ENCODE measurements at regions of chr3 and their contacts with region 1.

Region 1: GRCh38 chr3:190617185-190617584 is 103.3 kb downstream of the IL1RAP start:
- DNase-seq: peak; percentile 62
- H3K4me3 Mint-ChIP-seq: no peak overlapping the region
- H3K27ac Mint-ChIP-seq: peak overlapping the region; percentile 95
- H3K4me1 Mint-ChIP-seq: peaks cover 48% of the 10 kb centered on the region
- H3K27me3 Mint-ChIP-seq: no peaks in the 10 kb centered on the region

Region 2: GRCh38 chr3:190306513-190307165 is 310.5 kb before region 1 on chr3:
- CTCF ChIA-PET with region 1: no interaction called
- intact Hi-C with region 1: loop called (anchors 1 kb)
- DNase-seq: peak; percentile 49
- H3K4me3 Mint-ChIP-seq: no peak overlapping the region
- H3K27ac Mint-ChIP-seq: peak overlapping the region; percentile 33
- H3K4me1 Mint-ChIP-seq: peaks cover 25% of the 10 kb centered on the region
- H3K27me3 Mint-ChIP-seq: no peaks in the 10 kb centered on the region

Region 3: GRCh38 chr3:190384241-190384863 is 232.8 kb before region 1 on chr3:
- CTCF ChIA-PET with region 1: no interaction called
- intact Hi-C with region 1: loop called (anchors 5 kb)
- DNase-seq: peak; percentile 48
- H3K4me3 Mint-ChIP-seq: no peak overlapping the region
- H3K27ac Mint-ChIP-seq: no peak overlapping the region
- H3K4me1 Mint-ChIP-seq: peaks cover 8% of the 10 kb centered on the region
- H3K27me3 Mint-ChIP-seq: peaks cover 5% of the 10 kb centered on the region

Region 4: GRCh38 chr3:190491533-190492054 is 125.6 kb before region 1 on chr3:
- CTCF ChIA-PET with region 1: no interaction called
- intact Hi-C with region 1: loop called (anchors 1 kb)
- DNase-seq: peak; percentile 30
- H3K4me3 Mint-ChIP-seq: no peak overlapping the region
- H3K27ac Mint-ChIP-seq: no peak overlapping the region
- H3K4me1 Mint-ChIP-seq: peaks cover 24% of the 10 kb centered on the region
- H3K27me3 Mint-ChIP-seq: peaks cover 46% of the 10 kb centered on the region

Region 5: DNA sequence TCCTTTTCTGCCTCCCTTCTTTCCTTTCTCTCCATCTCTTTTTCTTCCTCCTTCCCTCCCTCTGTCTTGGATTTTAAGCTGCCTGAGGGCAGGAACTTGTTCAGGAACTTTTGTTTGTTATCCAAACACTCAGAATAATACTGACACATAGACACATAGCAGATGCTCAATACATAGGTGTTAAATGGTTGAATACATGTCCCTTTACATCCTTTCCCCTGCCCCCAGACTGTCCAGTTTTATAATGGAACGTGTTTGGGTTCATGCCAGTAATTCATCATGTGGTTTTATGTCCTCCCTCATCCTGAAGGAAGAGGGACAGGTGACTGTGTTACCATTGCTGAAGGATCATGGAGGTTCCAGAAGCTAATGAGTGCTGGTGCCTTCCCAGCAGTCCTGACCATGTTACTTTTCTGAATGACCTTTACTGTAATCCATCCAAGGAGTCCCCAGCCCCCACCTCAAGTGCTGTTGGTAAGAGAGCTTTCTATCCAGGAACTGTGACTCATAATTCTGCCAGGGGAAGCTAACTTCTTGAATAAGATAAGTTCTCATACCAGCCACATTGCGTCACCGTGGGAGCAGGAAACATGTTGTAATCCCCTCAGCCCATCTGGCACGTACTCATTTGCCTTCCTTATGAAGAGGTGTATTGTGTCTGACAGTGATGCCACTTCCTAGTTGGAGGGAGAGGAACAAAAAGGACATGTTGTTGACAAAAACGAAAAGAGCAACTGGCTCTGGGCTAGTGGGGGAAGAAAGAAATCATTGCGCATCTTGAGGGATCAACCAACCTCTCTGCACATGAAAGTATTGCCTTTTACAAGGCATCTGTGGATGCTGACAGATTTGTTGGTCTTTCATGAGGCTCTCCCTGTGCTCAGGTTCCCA is 50.9 kb before region 1 on chr3:
- CTCF ChIA-PET with region 1: interaction called, 6 read pairs
- intact Hi-C with region 1: loop called (anchors 1 kb)
- DNase-seq: peak; percentile 94
- H3K4me3 Mint-ChIP-seq: no peak overlapping the region
- H3K27ac Mint-ChIP-seq: peak overlapping the region; percentile 93
- H3K4me1 Mint-ChIP-seq: peaks cover 38% of the 10 kb centered on the region
- H3K27me3 Mint-ChIP-seq: no peaks in the 10 kb centered on the region

Region 6: DNA sequence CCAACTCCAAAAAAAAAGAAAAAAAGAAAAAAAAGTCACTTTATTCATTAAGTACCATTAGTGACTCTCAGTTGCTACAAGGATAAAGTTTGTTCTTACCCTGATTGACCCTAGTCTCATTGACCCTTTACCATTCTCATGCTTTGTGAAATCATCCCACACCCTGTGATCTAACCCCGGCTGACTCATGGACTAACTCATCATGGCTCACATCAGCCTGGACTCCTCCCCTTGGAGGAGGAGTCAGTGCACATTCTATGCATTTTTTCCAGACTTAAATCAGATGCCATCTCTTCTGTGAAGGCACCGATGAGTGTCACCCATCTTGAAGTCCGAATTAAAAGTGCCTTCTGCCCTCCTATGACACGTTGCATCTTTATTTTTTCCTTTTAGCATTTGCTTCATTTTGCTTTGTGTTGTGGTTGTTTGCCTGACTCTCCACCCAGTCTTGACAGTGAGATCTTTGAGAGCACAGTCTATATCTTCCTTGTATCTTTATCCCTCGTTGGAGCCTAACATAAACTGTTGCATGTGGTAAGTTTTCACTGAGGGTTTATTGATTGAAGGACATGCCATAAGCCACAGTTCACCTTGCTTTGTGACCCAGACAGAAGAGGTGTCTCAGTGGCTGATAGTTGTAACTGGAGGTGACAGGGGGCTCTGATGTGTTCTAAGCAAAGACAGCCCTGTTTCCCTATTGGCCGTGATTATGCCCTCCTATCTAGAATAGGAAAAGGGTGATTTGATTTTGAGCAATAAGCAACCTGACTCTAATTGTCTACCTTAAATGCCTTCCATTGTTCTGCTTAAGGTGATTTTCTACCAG is 31.2 kb before region 1 on chr3:
- CTCF ChIA-PET with region 1: interaction called, 4 read pairs
- intact Hi-C with region 1: loop called (anchors 1 kb)
- DNase-seq: peak; percentile 78
- H3K4me3 Mint-ChIP-seq: peak overlapping the region; percentile 50
- H3K27ac Mint-ChIP-seq: peak overlapping the region; percentile 88
- H3K4me1 Mint-ChIP-seq: peaks cover 37% of the 10 kb centered on the region
- H3K27me3 Mint-ChIP-seq: no peaks in the 10 kb centered on the region